CD4-positive, alpha-beta memory T cell (primary cell): ENCODE measurements at regions of chr3 and their contacts with region 1.

Region 1: GRCh38 chr3:19103510-19103909 is 44.8 kb upstream of the KCNH8 start:
- DNase-seq: peak in 1 of 5 donors; percentile 4
- H3K4me3 ChIP-seq: no peak overlapping the region
- H3K4me3 Mint-ChIP-seq: peak overlapping the region in 7 of 8 donors; percentile 77 to 96 (median 83)
- H3K27ac ChIP-seq: no peak overlapping the region
- H3K27ac Mint-ChIP-seq: peak overlapping the region in 4 of 7 donors; percentile 77 to 94 (median 84)
- H3K4me1 ChIP-seq: no peaks in the 10 kb centered on the region
- H3K4me1 Mint-ChIP-seq: peaks cover 0 to 14% (median 3%) of the 10 kb centered on the region in 4 donors
- H3K27me3 ChIP-seq: no peaks in the 10 kb centered on the region
- H3K27me3 Mint-ChIP-seq: no peaks in the 10 kb centered on the region

Region 2: GRCh38 chr3:19146685-19147650 is 43.5 kb after region 1 on chr3:
- CTCF ChIA-PET with region 1: no interaction called
- POLR2A ChIA-PET with region 1: interaction called, 3 read pairs
- intact Hi-C with region 1: loop called (anchors 1 kb)
- DNase-seq: peak; percentile 43 to 83 (median 55)
- H3K4me3 ChIP-seq: peak overlapping the region; percentile 32 to 72
- H3K4me3 Mint-ChIP-seq: peak overlapping the region; percentile 87 to 94 (median 92)
- H3K27ac ChIP-seq: no peak overlapping the region
- H3K27ac Mint-ChIP-seq: peak overlapping the region; percentile 34 to 87 (median 65)
- H3K4me1 ChIP-seq: peaks cover 22% of the 10 kb centered on the region
- H3K4me1 Mint-ChIP-seq: peaks cover 12 to 28% (median 17%) of the 10 kb centered on the region in 4 donors
- H3K27me3 ChIP-seq: peaks cover 7% of the 10 kb centered on the region
- H3K27me3 Mint-ChIP-seq: peaks cover 18 to 19% of the 10 kb centered on the region in 2 donors